ENCODE measurements at regions of chr20 and their contacts with region 1.

Region 1: GRCh38 chr20:31951530-31952453 is at the start of gene PDRG1:
- DNase-seq: peak; percentile 98
- H3K4me3 ChIP-seq: peak within 1 kb of the TSS; percentile 97 to 99 (median 97)
- H3K27ac ChIP-seq: peak within 1 kb of the TSS; percentile 85
- H3K4me1 ChIP-seq: peaks cover 7% of the 10 kb centered on the region
- H3K27me3 ChIP-seq: peaks cover 0 to 3% of the 10 kb centered on the region in 2 experiments
- CTCF ChIP-seq: peak; percentile 97 to 98
- POLR2A ChIP-seq: peak; percentile 84
- total RNA-seq, gene PDRG1: 12.6 and 14.6 TPM in 2 replicates

Region 2: GRCh38 chr20:31808481-31808880 is 143.3 kb before region 1 on chr20:
- CTCF ChIA-PET with region 1: no interaction called
- POLR2A ChIA-PET with region 1: no interaction called
- dilution Hi-C with region 1: no loop called
- intact Hi-C with region 1: no loop called
- DNase-seq: no peak
- H3K4me3 ChIP-seq: no peak overlapping the region
- H3K27ac ChIP-seq: no peak overlapping the region
- H3K4me1 ChIP-seq: peaks cover 8% of the 10 kb centered on the region
- H3K27me3 ChIP-seq: no peaks in the 10 kb centered on the region
- CTCF ChIP-seq: no peak
- POLR2A ChIP-seq: no peak

Region 3: DNA sequence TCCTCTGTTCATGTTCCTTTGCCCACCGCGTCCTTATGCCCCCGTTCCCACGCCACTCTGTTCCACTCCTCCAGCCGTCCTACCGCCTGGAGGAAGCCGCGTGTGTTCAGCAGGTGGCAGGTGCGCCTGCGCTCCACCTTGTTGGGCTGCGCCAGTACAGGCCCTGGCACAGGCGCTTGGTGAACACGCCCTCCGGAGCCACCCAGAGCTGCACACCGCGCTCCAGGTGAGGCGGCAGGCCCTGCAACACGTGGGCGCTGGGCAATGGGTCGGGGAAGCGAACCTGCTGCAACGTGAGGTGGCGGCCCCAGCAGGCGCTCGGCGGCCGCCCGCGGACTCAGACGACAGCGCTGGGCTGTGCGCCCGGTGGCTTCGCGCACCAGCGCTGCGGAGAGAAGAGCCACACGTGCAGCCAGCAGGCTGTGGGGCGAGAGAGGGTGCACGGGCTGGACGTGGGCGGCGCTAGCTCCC is 102.3 kb before region 1 on chr20:
- CTCF ChIA-PET with region 1: interaction called, 64 read pairs
- POLR2A ChIA-PET with region 1: interaction called, 4 read pairs
- dilution Hi-C with region 1: no loop called
- intact Hi-C with region 1: loop called (anchors 1 kb)
- DNase-seq: no peak
- H3K4me3 ChIP-seq: no peak overlapping the region
- H3K27ac ChIP-seq: no peak overlapping the region
- H3K4me1 ChIP-seq: no peaks in the 10 kb centered on the region
- H3K27me3 ChIP-seq: peaks cover 18 to 19% of the 10 kb centered on the region in 2 experiments
- CTCF ChIP-seq: no peak
- POLR2A ChIP-seq: no peak

Region 4: GRCh38 chr20:31861346-31862156 is 90.2 kb before region 1 on chr20:
- CTCF ChIA-PET with region 1: interaction called, 13 read pairs
- POLR2A ChIA-PET with region 1: no interaction called
- dilution Hi-C with region 1: no loop called
- intact Hi-C with region 1: no loop called
- DNase-seq: peak; percentile 56
- H3K4me3 ChIP-seq: peak overlapping the region in 2 of 3 experiments; percentile 32 to 37
- H3K27ac ChIP-seq: no peak overlapping the region
- H3K4me1 ChIP-seq: no peaks in the 10 kb centered on the region
- H3K27me3 ChIP-seq: peaks cover 21 to 26% of the 10 kb centered on the region in 2 experiments
- CTCF ChIP-seq: no peak
- POLR2A ChIP-seq: no peak

Region 5: DNA sequence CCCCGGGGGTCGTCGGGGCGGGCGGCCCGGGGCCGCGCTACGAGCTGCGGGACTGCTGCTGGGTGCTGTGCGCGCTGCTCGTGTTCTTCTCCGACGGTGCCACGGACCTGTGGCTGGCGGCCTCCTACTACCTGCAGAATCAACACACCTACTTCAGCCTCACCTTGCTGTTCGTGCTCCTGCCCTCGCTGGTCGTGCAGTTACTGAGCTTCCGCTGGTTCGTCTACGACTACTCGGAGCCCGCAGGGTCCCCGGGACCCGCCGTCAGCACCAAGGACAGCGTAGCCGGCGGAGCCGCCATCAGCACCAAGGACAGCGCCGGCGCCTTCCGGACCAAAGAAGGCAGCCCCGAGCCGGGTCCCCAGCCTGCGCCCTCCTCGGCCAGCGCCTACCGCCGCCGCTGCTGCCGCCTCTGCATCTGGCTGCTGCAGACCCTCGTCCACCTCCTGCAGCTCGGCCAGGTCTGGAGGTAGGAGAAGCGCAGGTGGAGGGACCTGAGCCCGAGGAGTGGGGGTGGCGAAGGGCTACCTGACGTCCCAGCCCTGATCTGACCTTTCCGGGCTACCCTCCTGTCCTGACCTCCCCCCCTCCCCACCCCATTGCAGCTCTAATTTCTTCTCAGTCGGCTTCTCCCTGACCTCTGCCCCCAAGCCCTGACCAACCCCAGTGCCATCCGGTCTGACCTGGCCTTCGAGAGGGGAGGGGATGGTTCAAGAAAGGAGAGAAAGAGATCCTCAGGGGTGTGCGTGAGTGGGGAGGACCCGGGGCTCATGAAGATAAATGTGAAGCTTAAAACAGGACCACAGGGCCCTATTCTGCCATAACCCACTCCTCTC is 16.7 kb after region 1 on chr20:
- CTCF ChIA-PET with region 1: interaction called, 24 read pairs
- POLR2A ChIA-PET with region 1: no interaction called
- dilution Hi-C with region 1: no loop called
- intact Hi-C with region 1: no loop called
- DNase-seq: peak; percentile 69
- H3K4me3 ChIP-seq: no peak overlapping the region
- H3K27ac ChIP-seq: no peak overlapping the region
- H3K4me1 ChIP-seq: no peaks in the 10 kb centered on the region
- H3K27me3 ChIP-seq: peaks cover 24 to 25% of the 10 kb centered on the region in 2 experiments
- CTCF ChIP-seq: no peak
- POLR2A ChIP-seq: no peak

Region 6: GRCh38 chr20:32018269-32019074 is 66.7 kb after region 1 on chr20:
- CTCF ChIA-PET with region 1: interaction called, 10 read pairs
- POLR2A ChIA-PET with region 1: no interaction called
- dilution Hi-C with region 1: no loop called
- intact Hi-C with region 1: loop called (anchors 1 kb)
- DNase-seq: peak; percentile 66
- H3K4me3 ChIP-seq: peak overlapping the region; percentile 49 to 64 (median 53)
- H3K27ac ChIP-seq: no peak overlapping the region
- H3K4me1 ChIP-seq: peaks cover 6% of the 10 kb centered on the region
- H3K27me3 ChIP-seq: no peaks in the 10 kb centered on the region
- CTCF ChIP-seq: peak in 1 of 2 donors; percentile 2
- POLR2A ChIP-seq: no peak

Region 7: GRCh38 chr20:32743237-32744112 is 791.7 kb after region 1 on chr20 and contains the start of gene COMMD7:
- CTCF ChIA-PET with region 1: no interaction called
- POLR2A ChIA-PET with region 1: no interaction called
- dilution Hi-C with region 1: no loop called
- intact Hi-C with region 1: no loop called
- DNase-seq: peak; percentile 57
- H3K4me3 ChIP-seq: peak within 1 kb of the TSS; percentile 73 to 90 (median 87)
- H3K27ac ChIP-seq: peak within 1 kb of the TSS; percentile 81
- H3K4me1 ChIP-seq: peaks cover 9% of the 10 kb centered on the region
- H3K27me3 ChIP-seq: no peaks in the 10 kb centered on the region
- CTCF ChIP-seq: no peak
- POLR2A ChIP-seq: no peak
- total RNA-seq, gene COMMD7: 55.9 and 58.8 TPM in 2 replicates

Measured in endothelial cell of umbilical vein (primary cell).